ENCODE measurements at regions of chr11 and their contacts with region 1.

Region 1: DNA sequence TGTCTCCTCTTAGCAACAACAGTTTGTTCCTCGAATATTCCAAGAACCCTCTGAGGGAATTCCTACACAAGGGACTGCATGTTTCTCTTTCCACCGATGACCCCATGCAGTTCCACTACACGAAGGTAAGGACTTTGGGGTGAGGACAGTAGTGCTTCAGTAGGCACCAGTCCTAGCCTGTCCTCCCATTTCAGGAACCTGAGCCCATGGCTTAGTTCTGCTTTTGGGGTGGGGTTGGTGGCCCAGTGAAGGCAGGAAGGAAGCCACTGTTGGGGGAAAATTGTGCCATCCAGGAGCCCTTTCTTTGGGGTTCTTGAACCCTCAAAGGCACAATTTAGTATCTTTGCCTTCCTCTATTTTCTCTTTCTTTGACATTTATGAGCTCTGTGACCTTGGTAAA is 38.2 kb downstream of the RNF141 start:
- DNase-seq: peak; percentile 46
- ATAC-seq: peak; percentile 51
- H3K4me3 ChIP-seq: peak overlapping the region in 1 of 5 experiments; percentile 18
- H3K4me3 Mint-ChIP-seq: peak overlapping the region; percentile 20
- H3K27ac ChIP-seq: peak overlapping the region; percentile 38 to 65
- H3K27ac Mint-ChIP-seq: peak overlapping the region; percentile 81
- H3K4me1 ChIP-seq: peaks cover 21% of the 10 kb centered on the region in 2 donors
- H3K4me1 Mint-ChIP-seq: peaks cover 27% of the 10 kb centered on the region
- H3K27me3 ChIP-seq: no peaks in the 10 kb centered on the region
- H3K27me3 Mint-ChIP-seq: no peaks in the 10 kb centered on the region
- CTCF ChIP-seq: no peak

Region 2: GRCh38 chr11:10514210-10514609 is 11.4 kb after region 1 on chr11:
- CTCF ChIA-PET with region 1: interaction called, 21 read pairs
- POLR2A ChIA-PET with region 1: no interaction called
- intact Hi-C with region 1: no loop called
- DNase-seq: peak; percentile 42
- ATAC-seq: no peak
- H3K4me3 ChIP-seq: no peak overlapping the region
- H3K4me3 Mint-ChIP-seq: no peak overlapping the region
- H3K27ac ChIP-seq: peak overlapping the region in 1 of 2 donors; percentile 7
- H3K27ac Mint-ChIP-seq: peak overlapping the region; percentile 43
- H3K4me1 ChIP-seq: no peaks in the 10 kb centered on the region
- H3K4me1 Mint-ChIP-seq: peaks cover 16% of the 10 kb centered on the region
- H3K27me3 ChIP-seq: no peaks in the 10 kb centered on the region
- H3K27me3 Mint-ChIP-seq: no peaks in the 10 kb centered on the region
- CTCF ChIP-seq: peak; percentile 62

Region 3: DNA sequence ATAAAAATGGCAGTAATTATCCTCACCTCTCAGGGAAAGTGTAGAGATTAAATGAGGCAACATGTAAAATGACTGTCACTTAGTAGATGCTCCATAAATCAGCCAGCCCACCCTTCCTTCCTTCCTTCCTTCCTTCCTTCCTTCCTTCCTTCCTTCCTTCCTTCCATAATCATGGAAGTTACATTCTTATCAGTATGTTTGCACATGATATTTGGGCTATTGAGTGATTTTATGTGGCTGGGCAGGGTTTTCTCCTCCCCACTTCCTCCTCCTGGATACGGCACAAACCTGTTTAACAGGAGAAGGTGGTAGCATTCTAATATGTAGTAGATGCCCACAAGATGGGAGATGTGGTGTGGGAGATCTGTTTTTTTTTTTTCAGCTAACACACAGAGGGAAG is 53.8 kb after region 1 on chr11:
- CTCF ChIA-PET with region 1: no interaction called
- POLR2A ChIA-PET with region 1: no interaction called
- intact Hi-C with region 1: no loop called
- DNase-seq: no peak
- ATAC-seq: no peak
- H3K4me3 ChIP-seq: no peak overlapping the region
- H3K4me3 Mint-ChIP-seq: no peak overlapping the region
- H3K27ac ChIP-seq: no peak overlapping the region
- H3K27ac Mint-ChIP-seq: no peak overlapping the region
- H3K4me1 ChIP-seq: peaks cover 7 to 9% of the 10 kb centered on the region in 2 donors
- H3K4me1 Mint-ChIP-seq: peaks cover 29% of the 10 kb centered on the region
- H3K27me3 ChIP-seq: no peaks in the 10 kb centered on the region
- H3K27me3 Mint-ChIP-seq: no peaks in the 10 kb centered on the region
- CTCF ChIP-seq: no peak

Region 4: GRCh38 chr11:10906513-10906912 is 403.7 kb after region 1 on chr11:
- CTCF ChIA-PET with region 1: no interaction called
- POLR2A ChIA-PET with region 1: no interaction called
- intact Hi-C with region 1: no loop called
- DNase-seq: no peak
- ATAC-seq: no peak
- H3K4me3 ChIP-seq: no peak overlapping the region
- H3K4me3 Mint-ChIP-seq: no peak overlapping the region
- H3K27ac ChIP-seq: no peak overlapping the region
- H3K27ac Mint-ChIP-seq: no peak overlapping the region
- H3K4me1 ChIP-seq: no peaks in the 10 kb centered on the region
- H3K4me1 Mint-ChIP-seq: no peaks in the 10 kb centered on the region
- H3K27me3 ChIP-seq: peaks cover 0 to 10% (median 1%) of the 10 kb centered on the region in 4 experiments
- H3K27me3 Mint-ChIP-seq: peaks cover 20% of the 10 kb centered on the region
- CTCF ChIP-seq: no peak